Activated CD8-positive, alpha-beta T cell treated with anti-CD3 and anti-CD28 coated beads, Interleukin-2, amount 10 ng/mL, durations not matched to agents 7 days and 5 days (primary cell): ENCODE measurements at regions of chr2 and their contacts with region 1.

Region 1: DNA sequence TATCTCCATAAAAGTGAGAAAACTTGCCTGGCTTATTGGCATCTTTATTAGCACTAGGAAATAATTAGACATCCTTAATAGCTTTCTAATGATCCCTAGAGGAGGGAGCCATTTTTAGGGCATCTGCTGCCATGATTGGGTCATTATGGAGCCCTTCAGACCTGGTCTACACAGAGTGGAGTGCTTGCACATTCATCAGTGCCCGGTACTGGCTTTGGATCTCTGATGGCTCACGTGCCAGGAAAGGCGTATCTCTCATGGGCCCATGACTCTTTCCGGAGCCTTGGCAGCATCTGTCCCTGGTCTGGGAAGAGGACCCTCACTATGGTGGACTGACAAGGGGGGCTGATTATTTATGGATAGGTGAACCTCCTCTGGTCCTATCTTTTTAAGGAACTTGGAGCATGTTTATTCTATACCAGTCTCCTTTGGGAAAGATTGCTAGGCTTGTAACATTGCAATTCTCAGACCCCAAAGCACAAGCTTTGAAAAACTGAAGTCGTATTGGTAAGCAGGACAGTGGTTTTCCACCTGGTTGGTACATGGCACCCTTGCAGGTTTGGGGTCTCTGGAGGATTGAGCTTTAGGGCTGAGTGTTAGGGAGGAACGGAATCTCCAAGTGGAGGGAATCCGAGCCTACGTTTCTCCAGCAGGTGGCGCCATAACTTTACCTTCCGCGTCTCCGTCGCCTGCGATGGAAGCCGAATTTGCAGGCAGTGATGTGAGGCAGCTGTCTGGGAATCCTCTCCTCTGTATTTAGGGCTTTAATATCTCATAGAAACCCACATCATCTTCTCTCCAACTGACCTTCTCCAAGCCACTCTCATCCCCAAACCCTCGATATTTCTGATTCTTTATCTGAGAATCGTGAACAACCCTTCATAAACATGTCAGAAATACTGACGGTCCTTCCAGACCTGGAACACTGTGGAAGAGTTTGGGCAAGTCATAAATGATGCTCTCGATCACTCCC is 27.8 kb downstream of the SIX2 start:
- DNase-seq: peak; percentile 76
- ATAC-seq: no peak
- H3K4me3 Mint-ChIP-seq: no peak overlapping the region
- H3K27ac Mint-ChIP-seq: no peak overlapping the region
- H3K4me1 Mint-ChIP-seq: no peaks in the 10 kb centered on the region
- H3K27me3 Mint-ChIP-seq: peaks cover 10% of the 10 kb centered on the region

Region 2: GRCh38 chr2:45000921-45001868 is 19.8 kb after region 1 on chr2:
- CTCF ChIA-PET with region 1: interaction called, 13 read pairs
- POLR2A ChIA-PET with region 1: no interaction called
- DNase-seq: no peak
- ATAC-seq: no peak
- H3K4me3 Mint-ChIP-seq: peak overlapping the region; percentile 10
- H3K27ac Mint-ChIP-seq: no peak overlapping the region
- H3K4me1 Mint-ChIP-seq: peaks cover 17% of the 10 kb centered on the region
- H3K27me3 Mint-ChIP-seq: peaks cover 84% of the 10 kb centered on the region

Region 3: GRCh38 chr2:45494269-45494977 is 513.0 kb after region 1 on chr2:
- CTCF ChIA-PET with region 1: interaction called, 56 read pairs
- POLR2A ChIA-PET with region 1: no interaction called
- DNase-seq: peak; percentile 32
- ATAC-seq: no peak
- H3K4me3 Mint-ChIP-seq: no peak overlapping the region
- H3K27ac Mint-ChIP-seq: no peak overlapping the region
- H3K4me1 Mint-ChIP-seq: peaks cover 11% of the 10 kb centered on the region
- H3K27me3 Mint-ChIP-seq: no peaks in the 10 kb centered on the region

Region 4: DNA sequence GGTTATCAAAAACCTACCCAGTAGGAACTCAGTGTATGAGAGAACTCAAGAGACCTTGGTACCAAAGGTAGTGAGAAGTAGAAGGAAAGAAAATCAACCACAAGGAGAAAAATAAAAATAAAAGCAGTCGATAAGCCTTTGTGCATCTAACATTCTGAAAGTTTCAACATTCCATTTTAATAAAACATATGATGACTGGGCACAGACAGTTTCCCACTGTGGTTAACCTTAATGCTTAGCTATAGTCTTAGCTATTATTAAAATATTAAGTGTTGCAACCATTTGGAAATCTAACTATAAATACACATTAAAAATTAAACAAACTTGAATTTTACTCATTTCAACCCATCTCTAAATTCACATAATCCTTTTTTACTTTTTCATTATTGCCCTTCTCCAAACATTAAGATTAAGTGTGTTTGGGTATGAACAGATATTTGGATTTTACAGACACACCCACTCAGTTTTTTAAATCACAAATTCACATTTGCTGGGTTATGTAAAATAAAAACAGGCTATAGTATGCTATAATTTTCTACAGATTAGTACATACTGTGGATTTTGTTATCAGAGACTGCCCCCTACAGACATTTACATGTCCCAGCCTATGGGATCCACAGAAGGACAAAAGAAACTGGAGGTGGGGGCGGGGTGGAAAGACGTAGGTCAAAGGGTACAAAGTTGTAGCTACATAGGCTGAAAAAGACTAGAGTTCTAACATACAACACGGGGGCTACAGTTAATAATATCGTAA is 596.8 kb after region 1 on chr2:
- CTCF ChIA-PET with region 1: interaction called, 14 read pairs
- POLR2A ChIA-PET with region 1: no interaction called
- DNase-seq: peak; percentile 32
- ATAC-seq: peak; percentile 84
- H3K4me3 Mint-ChIP-seq: no peak overlapping the region
- H3K27ac Mint-ChIP-seq: no peak overlapping the region
- H3K4me1 Mint-ChIP-seq: peaks cover 4% of the 10 kb centered on the region
- H3K27me3 Mint-ChIP-seq: no peaks in the 10 kb centered on the region

Region 5: DNA sequence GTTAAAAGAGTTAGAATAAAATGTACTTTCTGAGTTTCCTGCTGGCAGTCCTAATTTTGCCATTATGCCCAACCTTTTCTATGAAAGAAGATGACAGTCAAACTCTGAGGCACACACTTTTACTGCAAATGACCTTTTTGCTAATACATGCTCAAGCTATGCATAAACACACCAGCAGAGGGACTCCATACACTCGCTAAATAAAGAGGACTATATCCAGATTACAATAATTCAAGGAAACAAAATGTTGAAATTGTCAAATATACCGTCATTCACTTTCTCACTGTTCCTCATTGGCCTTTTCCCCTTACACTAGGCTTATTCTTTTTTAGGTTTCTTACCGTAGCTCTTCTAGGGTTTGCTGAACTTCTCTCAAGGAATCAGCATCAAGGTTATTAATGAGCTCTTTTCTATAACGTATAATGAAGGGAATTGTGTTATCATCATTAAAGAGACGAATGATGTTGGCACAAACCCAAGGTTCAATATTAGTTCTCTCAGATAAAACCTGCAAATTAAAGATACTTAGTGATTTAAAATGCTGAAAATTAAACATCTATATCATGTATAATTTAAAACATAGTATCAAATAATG is 603.9 kb after region 1 on chr2:
- CTCF ChIA-PET with region 1: interaction called, 10 read pairs
- POLR2A ChIA-PET with region 1: no interaction called
- DNase-seq: peak; percentile 47
- ATAC-seq: peak; percentile 62
- H3K4me3 Mint-ChIP-seq: no peak overlapping the region
- H3K27ac Mint-ChIP-seq: no peak overlapping the region
- H3K4me1 Mint-ChIP-seq: peaks cover 19% of the 10 kb centered on the region
- H3K27me3 Mint-ChIP-seq: no peaks in the 10 kb centered on the region